Heart left ventricle (tissue), 16 donors: ENCODE measurements at regions of chr3 and their contacts with region 1.

Region 1: DNA sequence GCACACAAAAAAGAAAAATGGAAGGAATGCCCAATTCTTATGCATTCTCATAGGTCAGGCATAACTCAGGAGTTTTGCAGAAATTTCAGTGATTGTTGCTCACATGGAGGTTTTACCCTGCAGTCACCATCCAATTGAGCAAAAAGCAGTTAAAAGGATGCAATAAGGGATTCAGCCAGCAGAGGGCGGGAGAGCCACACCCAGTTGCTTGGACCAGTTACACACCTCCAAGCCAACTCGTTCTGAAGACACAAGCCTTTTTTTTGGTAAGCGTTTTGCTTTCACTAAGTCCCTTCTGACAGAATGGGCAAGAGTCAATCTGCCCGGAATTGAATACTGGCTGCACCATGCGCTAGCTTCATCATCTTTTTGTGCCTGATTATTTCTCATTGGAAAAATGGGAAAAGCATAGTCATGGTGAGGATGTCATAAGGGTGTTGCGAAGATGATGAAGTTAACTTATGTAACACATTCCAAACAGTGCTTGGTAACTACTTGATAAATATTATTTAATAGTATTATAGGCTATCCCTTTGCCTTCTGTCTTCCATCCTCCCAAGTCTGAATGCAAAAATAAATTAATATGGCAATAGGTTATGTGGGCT is 154.4 kb upstream of the SGO1 start:
- DNase-seq: peak; percentile 48 to 68 (median 65)
- ATAC-seq: peak in 3 of 4 donors; percentile 72 to 81 (median 77)
- H3K4me3 ChIP-seq: no peak overlapping the region
- H3K27ac ChIP-seq: no peak overlapping the region
- H3K4me1 ChIP-seq: peaks cover 0 to 4% (median 0%) of the 10 kb centered on the region in 12 donors
- H3K27me3 ChIP-seq: no peaks in the 10 kb centered on the region
- CTCF ChIP-seq: peak; percentile 86 to 99 (median 94)
- POLR2A ChIP-seq: no peak

Region 2: GRCh38 chr3:19901918-19902317 is 438.5 kb before region 1 on chr3:
- intact Hi-C with region 1: no loop called
- DNase-seq: no peak
- ATAC-seq: no peak
- H3K4me3 ChIP-seq: no peak overlapping the region
- H3K27ac ChIP-seq: no peak overlapping the region
- H3K4me1 ChIP-seq: peaks cover 0 to 8% (median 0%) of the 10 kb centered on the region in 12 donors
- H3K27me3 ChIP-seq: no peaks in the 10 kb centered on the region
- CTCF ChIP-seq: no peak
- POLR2A ChIP-seq: no peak

Region 3: GRCh38 chr3:19920401-19921075 is 419.9 kb before region 1 on chr3:
- intact Hi-C with region 1: no loop called
- DNase-seq: no peak
- ATAC-seq: no peak
- H3K4me3 ChIP-seq: no peak overlapping the region
- H3K27ac ChIP-seq: no peak overlapping the region
- H3K4me1 ChIP-seq: no peaks in the 10 kb centered on the region
- H3K27me3 ChIP-seq: no peaks in the 10 kb centered on the region
- CTCF ChIP-seq: no peak
- POLR2A ChIP-seq: no peak

Region 4: GRCh38 chr3:20225769-20226168 is 114.7 kb before region 1 on chr3:
- intact Hi-C with region 1: loop called in 1 of 10 experiments (anchors 10 kb)
- DNase-seq: no peak
- ATAC-seq: no peak
- H3K4me3 ChIP-seq: no peak overlapping the region
- H3K27ac ChIP-seq: no peak overlapping the region
- H3K4me1 ChIP-seq: no peaks in the 10 kb centered on the region
- H3K27me3 ChIP-seq: no peaks in the 10 kb centered on the region
- CTCF ChIP-seq: peak; percentile 23 to 69 (median 48)
- POLR2A ChIP-seq: no peak

Region 5: GRCh38 chr3:20405744-20406143 is 65.3 kb after region 1 on chr3:
- intact Hi-C with region 1: no loop called
- DNase-seq: no peak
- ATAC-seq: no peak
- H3K4me3 ChIP-seq: no peak overlapping the region
- H3K27ac ChIP-seq: no peak overlapping the region
- H3K4me1 ChIP-seq: peaks cover 0 to 5% (median 0%) of the 10 kb centered on the region in 12 donors
- H3K27me3 ChIP-seq: no peaks in the 10 kb centered on the region
- CTCF ChIP-seq: no peak
- POLR2A ChIP-seq: no peak

Region 6: GRCh38 chr3:20739814-20740213 is 399.4 kb after region 1 on chr3:
- intact Hi-C with region 1: loop called in 4 of 10 experiments (anchors 5 to 10 kb)
- DNase-seq: no peak
- ATAC-seq: no peak
- H3K4me3 ChIP-seq: no peak overlapping the region
- H3K27ac ChIP-seq: no peak overlapping the region
- H3K4me1 ChIP-seq: peaks cover 0 to 4% (median 0%) of the 10 kb centered on the region in 12 donors
- H3K27me3 ChIP-seq: no peaks in the 10 kb centered on the region
- CTCF ChIP-seq: peak in 10 of 12 donors; percentile 21 to 43 (median 31)
- POLR2A ChIP-seq: no peak

Region 7: GRCh38 chr3:21477541-21478288 is 1137.3 kb after region 1 on chr3:
- intact Hi-C with region 1: loop called in 3 of 10 experiments (anchors 5 to 10 kb)
- DNase-seq: no peak
- ATAC-seq: no peak
- H3K4me3 ChIP-seq: no peak overlapping the region
- H3K27ac ChIP-seq: no peak overlapping the region
- H3K4me1 ChIP-seq: peaks cover 0 to 20% (median 3%) of the 10 kb centered on the region in 12 donors
- H3K27me3 ChIP-seq: no peaks in the 10 kb centered on the region
- CTCF ChIP-seq: no peak
- POLR2A ChIP-seq: no peak

Region 8: GRCh38 chr3:21484057-21484827 is 1143.8 kb after region 1 on chr3:
- intact Hi-C with region 1: loop called in 3 of 10 experiments (anchors 5 to 10 kb)
- DNase-seq: peak; percentile 39 to 57 (median 46)
- ATAC-seq: peak in 3 of 4 donors; percentile 33 to 44 (median 41)
- H3K4me3 ChIP-seq: no peak overlapping the region
- H3K27ac ChIP-seq: no peak overlapping the region
- H3K4me1 ChIP-seq: peaks cover 0 to 3% (median 0%) of the 10 kb centered on the region in 12 donors
- H3K27me3 ChIP-seq: no peaks in the 10 kb centered on the region
- CTCF ChIP-seq: peak; percentile 45 to 73 (median 58)
- POLR2A ChIP-seq: no peak

Region 9: GRCh38 chr3:21894459-21895340 is 1554.3 kb after region 1 on chr3:
- intact Hi-C with region 1: loop called in 4 of 10 experiments (anchors 2 to 10 kb)
- DNase-seq: peak in 1 of 5 donors; percentile 24
- ATAC-seq: peak; percentile 30 to 62 (median 50)
- H3K4me3 ChIP-seq: peak overlapping the region in 1 of 12 donors; percentile 15
- H3K27ac ChIP-seq: peak overlapping the region in 3 of 12 donors; percentile 16 to 39 (median 21)
- H3K4me1 ChIP-seq: peaks cover 0 to 24% (median 4%) of the 10 kb centered on the region in 12 donors
- H3K27me3 ChIP-seq: no peaks in the 10 kb centered on the region
- CTCF ChIP-seq: peak; percentile 45 to 84 (median 70)
- POLR2A ChIP-seq: no peak

Region 10: GRCh38 chr3:22117751-22118346 is 1777.4 kb after region 1 on chr3:
- intact Hi-C with region 1: loop called in 6 of 10 experiments (anchors 5 to 10 kb)
- DNase-seq: no peak
- ATAC-seq: no peak
- H3K4me3 ChIP-seq: no peak overlapping the region
- H3K27ac ChIP-seq: no peak overlapping the region
- H3K4me1 ChIP-seq: no peaks in the 10 kb centered on the region
- H3K27me3 ChIP-seq: no peaks in the 10 kb centered on the region
- CTCF ChIP-seq: peak; percentile 52 to 80 (median 66)
- POLR2A ChIP-seq: no peak